Activated T-helper 1 cell treated with anti-CD3 and anti-CD28 coated beads, Interleukin-12 subunit alpha, Interleukin-12 subunit beta, Interleukin-2, Interleukin-4 antibody, amounts not matched to agents 30 ng/mL and 10 ng/mL and 1 ng/mL, durations not matched to agents 14 hours and 24 hours and 36 hours (primary cell): ENCODE measurements at regions of chr5 and their contacts with region 1.

Region 1: GRCh38 chr5:95760273-95761191 is 29.4 kb downstream of the RHOBTB3 start:
- DNase-seq: no peak
- H3K4me3 Mint-ChIP-seq: peak overlapping the region; percentile 52
- H3K27ac Mint-ChIP-seq: peak overlapping the region; percentile 45
- H3K4me1 Mint-ChIP-seq: peaks cover 30% of the 10 kb centered on the region
- H3K27me3 Mint-ChIP-seq: peaks cover 22% of the 10 kb centered on the region

Region 2: GRCh38 chr5:95382801-95383200 is 377.7 kb before region 1 on chr5:
- intact Hi-C with region 1: no loop called
- DNase-seq: no peak
- H3K4me3 Mint-ChIP-seq: no peak overlapping the region
- H3K27ac Mint-ChIP-seq: no peak overlapping the region
- H3K4me1 Mint-ChIP-seq: no peaks in the 10 kb centered on the region
- H3K27me3 Mint-ChIP-seq: peaks cover 6% of the 10 kb centered on the region

Region 3: GRCh38 chr5:95712347-95712958 is 48.1 kb before region 1 on chr5:
- intact Hi-C with region 1: no loop called
- DNase-seq: no peak
- H3K4me3 Mint-ChIP-seq: no peak overlapping the region
- H3K27ac Mint-ChIP-seq: no peak overlapping the region
- H3K4me1 Mint-ChIP-seq: peaks cover 5% of the 10 kb centered on the region
- H3K27me3 Mint-ChIP-seq: peaks cover 20% of the 10 kb centered on the region

Region 4: GRCh38 chr5:95746722-95747679 is 13.5 kb before region 1 on chr5:
- intact Hi-C with region 1: loop called (anchors 1 kb)
- DNase-seq: no peak
- H3K4me3 Mint-ChIP-seq: no peak overlapping the region
- H3K27ac Mint-ChIP-seq: no peak overlapping the region
- H3K4me1 Mint-ChIP-seq: peaks cover 6% of the 10 kb centered on the region
- H3K27me3 Mint-ChIP-seq: peaks cover 7% of the 10 kb centered on the region

Region 5: GRCh38 chr5:96279801-96280542 is 519.4 kb after region 1 on chr5:
- intact Hi-C with region 1: no loop called
- DNase-seq: peak; percentile 14
- H3K4me3 Mint-ChIP-seq: peak overlapping the region; percentile 27
- H3K27ac Mint-ChIP-seq: peak overlapping the region; percentile 56
- H3K4me1 Mint-ChIP-seq: peaks cover 40% of the 10 kb centered on the region
- H3K27me3 Mint-ChIP-seq: peaks cover 4% of the 10 kb centered on the region